Right lobe of liver (tissue), 6 donors: ENCODE measurements at regions of chr2 and their contacts with region 1.

Region 1: DNA sequence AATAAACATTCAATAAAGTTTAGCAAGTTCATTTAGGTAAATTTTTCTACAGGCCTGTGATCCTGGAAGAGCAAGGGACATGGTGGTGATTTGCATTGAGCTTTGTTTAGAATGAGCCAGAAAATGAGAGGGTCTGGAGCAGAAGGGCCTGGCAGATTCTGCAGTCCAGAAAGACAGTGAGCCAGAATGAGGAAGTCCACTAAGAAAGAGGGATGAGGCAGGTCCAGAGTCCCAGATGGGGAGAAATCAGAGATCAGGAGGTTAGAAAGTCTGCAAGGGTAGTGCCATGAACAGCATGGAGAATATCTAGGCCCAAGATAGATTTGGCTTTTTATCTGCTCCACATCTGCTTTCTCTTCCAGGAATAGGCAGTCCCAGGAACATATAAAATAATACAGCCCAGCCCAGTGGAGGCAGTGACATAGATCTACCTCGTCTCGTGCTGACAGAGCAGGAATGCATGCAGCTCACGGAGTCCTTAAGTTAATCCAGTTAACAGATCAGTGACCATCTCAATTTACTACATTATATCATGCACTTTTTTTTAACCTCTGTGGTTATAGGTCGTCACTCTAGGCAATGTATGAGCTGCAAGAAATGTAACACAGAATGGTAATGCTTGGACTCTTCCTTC is 429.1 kb downstream of the SUCLG1 start:
- DNase-seq: no peak
- ATAC-seq: no peak
- H3K4me3 ChIP-seq: no peak overlapping the region
- H3K27ac ChIP-seq: no peak overlapping the region
- H3K4me1 ChIP-seq: no peaks in the 10 kb centered on the region
- H3K27me3 ChIP-seq: no peaks in the 10 kb centered on the region
- CTCF ChIP-seq: no peak
- POLR2A ChIP-seq: no peak

Region 2: DNA sequence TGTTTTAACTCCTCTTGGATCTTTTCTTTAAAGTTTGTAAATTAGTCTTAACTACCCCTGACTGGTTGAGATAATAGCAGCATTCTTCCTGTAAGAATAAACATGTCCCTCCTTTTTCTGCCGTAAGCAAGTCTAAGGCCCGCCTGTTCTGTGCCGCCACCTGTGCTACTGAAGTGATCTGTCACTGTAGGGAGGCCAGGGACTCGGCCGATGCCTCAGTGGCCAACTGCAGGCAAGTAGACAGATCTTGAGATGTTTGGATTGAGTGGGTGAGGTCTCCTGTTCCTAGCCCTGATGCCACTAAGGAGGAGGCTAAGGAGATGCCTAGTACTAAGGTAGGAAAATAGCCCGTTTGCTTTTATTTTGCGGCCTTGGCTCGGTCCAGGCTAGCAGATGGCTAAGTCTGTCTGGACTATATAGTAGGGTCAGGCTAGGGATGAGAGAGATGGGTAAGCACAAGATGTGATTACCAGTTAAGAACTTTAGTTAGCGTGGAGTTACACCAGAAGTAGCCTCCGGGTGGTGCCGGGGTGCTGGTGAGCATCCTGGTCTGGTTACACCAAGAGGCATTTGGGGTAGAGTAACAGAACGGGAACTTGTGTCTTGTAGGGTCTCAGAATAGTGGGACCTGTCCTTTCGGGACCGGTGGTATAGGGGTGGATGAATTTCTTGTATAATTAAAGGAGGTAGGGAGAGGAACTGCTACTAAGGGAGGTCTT is 155.1 kb before region 1 on chr2:
- intact Hi-C with region 1: no loop called
- DNase-seq: no peak
- ATAC-seq: no peak
- H3K4me3 ChIP-seq: no peak overlapping the region
- H3K27ac ChIP-seq: no peak overlapping the region
- H3K4me1 ChIP-seq: no peaks in the 10 kb centered on the region
- H3K27me3 ChIP-seq: no peaks in the 10 kb centered on the region
- CTCF ChIP-seq: no peak
- POLR2A ChIP-seq: no peak

Region 3: DNA sequence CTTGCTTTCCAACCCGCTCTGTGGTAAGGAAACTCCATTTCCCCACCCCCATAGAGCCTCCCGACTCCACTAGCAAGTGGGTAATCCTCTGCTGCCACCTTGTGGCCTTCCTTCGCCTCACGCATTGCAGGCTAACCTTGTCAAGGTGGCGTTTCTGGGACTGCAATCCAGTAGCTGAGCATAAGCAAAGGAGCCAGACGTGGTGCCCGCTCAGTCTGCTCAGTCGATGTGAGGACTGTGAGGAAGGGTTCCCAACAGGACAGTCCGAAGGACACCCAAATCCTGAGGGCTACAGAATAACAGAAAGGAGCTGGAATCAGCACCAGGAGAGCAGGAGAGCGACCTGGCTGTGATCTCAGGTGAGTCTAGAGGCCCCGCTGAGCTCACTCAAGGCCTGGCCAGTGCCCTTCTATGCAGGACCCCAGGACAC is 284.9 kb after region 1 on chr2:
- intact Hi-C with region 1: loop called (anchors 5 to 10 kb)
- DNase-seq: peak; percentile 84 to 88 (median 86)
- ATAC-seq: peak; percentile 98 to 100 (median 100)
- H3K4me3 ChIP-seq: no peak overlapping the region
- H3K27ac ChIP-seq: no peak overlapping the region
- H3K4me1 ChIP-seq: no peaks in the 10 kb centered on the region
- H3K27me3 ChIP-seq: no peaks in the 10 kb centered on the region
- CTCF ChIP-seq: peak; percentile 88 to 97 (median 94)
- POLR2A ChIP-seq: no peak

Region 4: DNA sequence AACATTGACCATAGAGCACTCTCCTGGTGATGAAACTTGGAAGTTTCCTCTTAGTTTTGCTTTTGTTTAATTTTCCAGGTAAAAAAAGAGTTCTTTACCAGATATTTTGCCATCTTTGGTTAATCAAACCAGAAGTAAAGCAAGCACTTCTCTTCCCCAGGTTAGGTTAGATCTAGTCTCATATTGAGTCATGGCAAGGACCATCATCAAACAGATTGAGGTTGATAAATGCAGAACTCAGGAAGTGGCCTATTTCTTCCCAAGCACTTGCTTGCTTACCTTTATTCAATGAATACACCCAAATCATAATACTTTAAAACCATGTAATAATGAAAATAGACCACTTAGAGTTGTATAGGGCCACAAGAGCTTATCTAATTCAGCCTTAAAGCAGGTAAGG is 509.7 kb after region 1 on chr2:
- intact Hi-C with region 1: no loop called
- DNase-seq: no peak
- ATAC-seq: no peak
- H3K4me3 ChIP-seq: no peak overlapping the region
- H3K27ac ChIP-seq: no peak overlapping the region
- H3K4me1 ChIP-seq: no peaks in the 10 kb centered on the region
- H3K27me3 ChIP-seq: no peaks in the 10 kb centered on the region
- CTCF ChIP-seq: no peak
- POLR2A ChIP-seq: no peak